Endothelial cell of umbilical vein (primary cell): ENCODE measurements at regions of chr17 and their contacts with region 1.

Region 1: GRCh38 chr17:81044764-81045589 is 10.0 kb downstream of the BAIAP2 start:
- DNase-seq: peak; percentile 85
- H3K4me3 ChIP-seq: no peak overlapping the region
- H3K27ac ChIP-seq: peak overlapping the region; percentile 43
- H3K4me1 ChIP-seq: peaks cover 29% of the 10 kb centered on the region
- H3K27me3 ChIP-seq: no peaks in the 10 kb centered on the region
- CTCF ChIP-seq: no peak
- POLR2A ChIP-seq: no peak

Region 2: GRCh38 chr17:80949451-80950421 is 95.2 kb before region 1 on chr17:
- CTCF ChIA-PET with region 1: no interaction called
- POLR2A ChIA-PET with region 1: no interaction called
- dilution Hi-C with region 1: no loop called
- intact Hi-C with region 1: no loop called
- DNase-seq: no peak
- H3K4me3 ChIP-seq: no peak overlapping the region
- H3K27ac ChIP-seq: no peak overlapping the region
- H3K4me1 ChIP-seq: no peaks in the 10 kb centered on the region
- H3K27me3 ChIP-seq: no peaks in the 10 kb centered on the region
- CTCF ChIP-seq: no peak
- POLR2A ChIP-seq: no peak

Region 3: GRCh38 chr17:80981062-80981902 is 63.7 kb before region 1 on chr17:
- CTCF ChIA-PET with region 1: no interaction called
- POLR2A ChIA-PET with region 1: no interaction called
- dilution Hi-C with region 1: no loop called
- intact Hi-C with region 1: no loop called
- DNase-seq: no peak
- H3K4me3 ChIP-seq: no peak overlapping the region
- H3K27ac ChIP-seq: no peak overlapping the region
- H3K4me1 ChIP-seq: no peaks in the 10 kb centered on the region
- H3K27me3 ChIP-seq: no peaks in the 10 kb centered on the region
- CTCF ChIP-seq: peak; percentile 57 to 71
- POLR2A ChIP-seq: no peak

Region 4: GRCh38 chr17:81018044-81018802 is 26.8 kb before region 1 on chr17:
- CTCF ChIA-PET with region 1: interaction called, 10 read pairs
- POLR2A ChIA-PET with region 1: no interaction called
- dilution Hi-C with region 1: no loop called
- intact Hi-C with region 1: no loop called
- DNase-seq: peak; percentile 65
- H3K4me3 ChIP-seq: peak overlapping the region in 2 of 3 experiments; percentile 28 to 51
- H3K27ac ChIP-seq: peak overlapping the region; percentile 29
- H3K4me1 ChIP-seq: peaks cover 12% of the 10 kb centered on the region
- H3K27me3 ChIP-seq: no peaks in the 10 kb centered on the region
- CTCF ChIP-seq: no peak
- POLR2A ChIP-seq: peak; percentile 50